ENCODE measurements at regions of chr17 and their contacts with region 1.

Region 1: GRCh38 chr17:40542558-40543411 is 22.5 kb downstream of the CCR7 start:
- DNase-seq: peak; percentile 92
- H3K4me3 ChIP-seq: no peak overlapping the region
- H3K27ac ChIP-seq: peak overlapping the region; percentile 99
- H3K27me3 ChIP-seq: no peaks in the 10 kb centered on the region
- CTCF ChIP-seq: no peak

Region 2: DNA sequence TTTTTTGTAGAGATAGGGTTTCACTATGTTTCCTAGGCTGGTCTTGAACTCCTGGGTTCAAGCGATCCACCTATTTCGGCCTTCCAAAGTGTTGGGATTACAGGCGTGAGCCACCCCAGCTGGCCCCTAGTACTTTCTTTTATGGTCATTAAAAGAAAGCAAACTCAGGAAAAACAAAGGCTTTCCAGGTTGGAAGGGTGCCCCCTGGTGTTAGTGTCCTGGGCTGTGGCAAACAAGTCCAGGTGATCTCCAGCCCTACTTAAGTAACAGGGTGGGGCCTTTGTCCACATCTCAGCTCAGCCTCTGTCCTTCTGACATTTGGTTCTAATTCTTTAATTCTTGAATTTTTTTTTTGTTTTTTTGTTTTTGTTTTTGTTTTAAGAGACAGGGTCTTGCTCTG is 92.6 kb before region 1 on chr17:
- CTCF ChIA-PET with region 1: interaction called, 3 read pairs
- POLR2A ChIA-PET with region 1: interaction called, 10 read pairs
- DNase-seq: no peak
- H3K4me3 ChIP-seq: peak overlapping the region; percentile 22; the same call in 1 of the 2 replicates
- H3K27ac ChIP-seq: peak overlapping the region; percentile 85
- H3K27me3 ChIP-seq: no peaks in the 10 kb centered on the region
- CTCF ChIP-seq: peak; percentile 57

Region 3: DNA sequence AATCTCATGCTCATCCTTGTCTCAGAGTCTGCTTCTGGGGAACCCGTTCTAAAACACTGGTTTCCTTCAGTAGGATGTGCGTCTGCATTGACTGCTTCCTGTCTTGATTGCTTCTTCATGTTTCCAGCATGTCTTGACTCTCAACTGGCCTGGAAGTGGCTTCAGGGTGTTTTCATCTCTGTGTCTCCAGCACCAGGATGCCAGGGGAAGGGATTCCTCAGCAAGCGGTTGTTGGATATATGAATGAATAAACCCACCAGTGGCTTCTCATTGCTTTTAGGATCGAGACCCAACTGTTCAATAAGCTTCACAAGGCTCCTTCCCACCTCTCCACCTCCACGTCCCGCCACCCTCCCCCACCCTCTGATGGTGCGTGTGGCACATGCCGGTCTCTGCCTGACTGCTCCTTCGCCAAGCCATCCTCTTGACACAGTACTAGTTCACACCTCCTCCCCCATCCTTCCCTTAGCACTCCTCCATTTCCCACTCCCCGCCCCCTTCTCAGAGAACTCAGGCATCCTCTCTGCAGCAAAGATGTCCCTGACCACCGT is 27.2 kb before region 1 on chr17:
- CTCF ChIA-PET with region 1: no interaction called
- POLR2A ChIA-PET with region 1: no interaction called
- DNase-seq: no peak
- H3K4me3 ChIP-seq: no peak overlapping the region
- H3K27ac ChIP-seq: no peak overlapping the region
- H3K27me3 ChIP-seq: no peaks in the 10 kb centered on the region
- CTCF ChIP-seq: no peak

Measured in AG04450 (cell line).